Vagina (tissue), 2 donors: ENCODE measurements at regions of chr16 and their contacts with region 1.

Region 1: DNA sequence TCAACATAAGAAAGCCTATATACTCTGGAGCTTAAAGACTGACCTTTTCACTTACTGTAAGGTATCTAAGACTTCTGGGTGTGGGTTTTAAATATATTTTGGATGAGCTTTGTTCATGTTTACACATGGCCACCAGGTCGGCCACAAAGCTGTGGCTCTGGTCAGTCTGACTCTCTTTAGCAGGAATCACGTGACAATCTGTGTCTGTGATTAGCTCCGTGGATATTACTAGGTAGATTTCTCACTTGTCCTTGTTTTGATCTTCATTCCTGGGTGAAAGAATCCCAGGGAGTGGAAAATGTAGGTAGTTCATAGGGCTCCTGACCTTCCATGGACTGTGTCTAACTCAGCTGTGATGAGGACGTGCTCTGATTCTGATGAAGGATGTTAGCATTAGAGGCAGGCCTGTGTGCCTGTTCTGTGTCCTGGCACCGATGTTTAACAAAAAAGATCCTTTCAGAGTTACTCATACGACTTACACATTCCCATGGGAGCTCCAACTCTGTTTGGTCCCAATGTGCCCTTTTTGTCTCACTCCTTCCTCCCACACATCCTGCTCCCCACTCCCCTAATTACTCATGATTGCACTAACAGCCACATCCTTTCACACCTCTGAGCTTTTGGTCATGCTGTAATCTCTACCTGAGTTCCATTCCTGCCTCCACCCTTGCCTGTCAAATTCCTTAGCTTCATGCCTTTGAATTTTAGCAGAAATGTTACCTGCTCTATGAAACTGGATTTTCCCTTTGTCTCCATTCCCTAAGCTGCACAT is 425.1 kb downstream of the MAF start:
- DNase-seq: no peak
- H3K4me3 ChIP-seq: no peak overlapping the region
- H3K27ac ChIP-seq: no peak overlapping the region
- H3K4me1 ChIP-seq: no peaks in the 10 kb centered on the region
- H3K27me3 ChIP-seq: no peaks in the 10 kb centered on the region
- CTCF ChIP-seq: no peak
- POLR2A ChIP-seq: no peak

Region 2: DNA sequence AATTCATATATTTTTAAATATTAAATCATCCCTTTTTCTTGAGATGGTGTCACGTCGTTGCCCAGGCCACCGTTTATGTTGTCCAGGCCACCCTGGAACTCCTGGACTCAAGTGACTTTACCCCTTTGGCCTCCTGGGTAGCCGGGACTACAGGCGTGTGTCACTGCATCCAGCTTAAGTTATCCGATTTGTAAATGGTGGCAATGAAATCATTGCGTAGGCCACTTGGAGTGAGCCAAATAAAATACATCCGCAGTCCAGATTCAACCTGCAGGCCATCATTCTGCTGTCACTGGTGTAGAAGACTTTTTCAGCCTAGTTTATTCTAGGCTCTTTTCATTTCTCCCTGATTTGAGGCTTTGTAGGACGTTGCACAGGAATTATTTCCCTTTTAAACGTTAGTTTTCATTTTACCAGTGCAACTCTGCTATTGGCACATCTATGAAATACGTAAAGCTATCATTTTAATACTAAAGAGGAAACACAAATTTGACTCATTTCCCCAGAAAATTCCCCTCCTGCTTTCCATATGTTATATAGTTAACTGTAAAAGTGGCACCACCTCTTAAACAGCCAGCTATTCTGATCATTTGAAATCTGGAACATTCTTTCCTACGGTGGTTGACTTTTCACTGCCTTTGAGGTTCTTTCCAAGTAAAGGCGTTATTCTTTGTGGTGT is 24.7 kb before region 1 on chr16:
- intact Hi-C with region 1: loop called (anchors 1 kb)
- DNase-seq: no peak
- H3K4me3 ChIP-seq: no peak overlapping the region
- H3K27ac ChIP-seq: no peak overlapping the region
- H3K4me1 ChIP-seq: no peaks in the 10 kb centered on the region
- H3K27me3 ChIP-seq: no peaks in the 10 kb centered on the region
- CTCF ChIP-seq: no peak
- POLR2A ChIP-seq: no peak